Activated B cell treated with CpG ODN at 0.5 μM for 24 hours (primary cell): ENCODE measurements at regions of chr3 and their contacts with region 1.

Region 1: GRCh38 chr3:126679318-126679751 is 24.4 kb upstream of the TXNRD3 start:
- DNase-seq: peak; percentile 78
- ATAC-seq: peak; percentile 86
- H3K4me3 Mint-ChIP-seq: peak overlapping the region; percentile 67
- H3K27ac Mint-ChIP-seq: no peak overlapping the region
- H3K4me1 Mint-ChIP-seq: peaks cover 25% of the 10 kb centered on the region
- H3K27me3 Mint-ChIP-seq: peaks cover 5% of the 10 kb centered on the region
- CTCF ChIP-seq: peak; percentile 86

Region 2: DNA sequence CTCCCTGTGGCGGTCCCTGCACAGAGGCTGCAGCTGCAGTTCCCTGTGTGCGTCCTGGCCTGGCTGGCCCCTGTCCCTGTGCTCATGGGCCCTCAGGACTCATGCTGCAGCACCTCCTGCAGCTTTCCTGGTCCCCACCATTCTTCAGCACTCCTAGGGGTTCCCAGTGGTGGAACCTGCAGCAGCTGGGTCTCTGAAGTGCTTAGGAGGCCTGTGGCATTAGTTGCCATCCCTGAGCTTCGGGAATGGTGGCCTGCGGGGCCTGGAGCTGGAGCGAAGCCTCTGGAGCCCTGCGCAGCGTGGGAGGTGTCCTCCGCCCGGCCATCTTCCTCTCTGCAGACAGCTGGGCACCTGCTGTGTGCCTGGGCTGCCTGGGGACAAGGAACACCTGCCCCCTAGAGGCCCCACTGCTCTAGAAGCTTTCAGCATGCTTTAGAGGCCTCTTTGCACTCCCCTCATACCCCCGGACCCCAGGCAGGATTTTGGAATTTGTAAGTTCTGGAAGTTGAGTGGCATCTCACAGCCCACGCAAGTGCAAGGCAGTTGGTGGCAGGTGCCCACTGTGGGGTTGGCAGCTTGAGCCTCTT is 316.7 kb after region 1 on chr3:
- CTCF ChIA-PET with region 1: interaction called, 5 read pairs
- POLR2A ChIA-PET with region 1: no interaction called
- intact Hi-C with region 1: loop called (anchors 2 kb)
- DNase-seq: no peak
- ATAC-seq: no peak
- H3K4me3 Mint-ChIP-seq: no peak overlapping the region
- H3K27ac Mint-ChIP-seq: no peak overlapping the region
- H3K4me1 Mint-ChIP-seq: peaks cover 9% of the 10 kb centered on the region
- H3K27me3 Mint-ChIP-seq: no peaks in the 10 kb centered on the region
- CTCF ChIP-seq: no peak

Region 3: DNA sequence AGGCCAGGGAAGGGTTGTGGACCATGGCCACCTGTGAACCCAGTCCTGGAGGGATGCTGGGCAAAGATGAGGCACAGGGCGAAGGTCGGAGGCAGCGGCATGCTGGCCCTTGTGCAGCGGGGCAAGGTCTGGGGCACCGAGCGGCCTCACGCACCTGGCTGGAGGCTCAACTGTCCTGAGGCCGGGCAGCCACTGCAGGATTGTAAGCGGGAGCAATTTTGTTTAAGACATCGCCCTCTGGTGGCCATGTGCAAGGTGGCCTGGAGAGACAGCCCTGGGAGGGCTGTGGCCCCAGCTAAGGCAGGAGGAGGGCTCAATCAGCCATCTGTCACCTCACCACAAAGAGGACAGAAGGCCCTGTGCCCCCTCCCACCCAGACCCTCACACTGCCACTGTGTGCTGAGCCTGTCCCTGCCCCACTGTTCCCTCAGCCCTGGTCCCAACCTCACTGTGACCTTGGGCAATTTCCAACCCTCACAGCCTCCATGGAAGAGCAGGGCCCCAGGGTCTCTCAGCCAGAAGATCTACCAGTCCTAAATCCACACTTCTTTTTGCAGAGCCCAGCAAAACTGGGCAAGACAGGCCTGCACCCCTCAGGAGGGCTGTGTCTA is 865.0 kb after region 1 on chr3:
- CTCF ChIA-PET with region 1: interaction called, 31 read pairs
- POLR2A ChIA-PET with region 1: no interaction called
- intact Hi-C with region 1: loop called (anchors 1 kb)
- DNase-seq: peak; percentile 51
- ATAC-seq: peak; percentile 46
- H3K4me3 Mint-ChIP-seq: no peak overlapping the region
- H3K27ac Mint-ChIP-seq: no peak overlapping the region
- H3K4me1 Mint-ChIP-seq: peaks cover 14% of the 10 kb centered on the region
- H3K27me3 Mint-ChIP-seq: peaks cover 3% of the 10 kb centered on the region
- CTCF ChIP-seq: no peak